ENCODE measurements at regions of chr3 and their contacts with region 1.

Region 1: DNA sequence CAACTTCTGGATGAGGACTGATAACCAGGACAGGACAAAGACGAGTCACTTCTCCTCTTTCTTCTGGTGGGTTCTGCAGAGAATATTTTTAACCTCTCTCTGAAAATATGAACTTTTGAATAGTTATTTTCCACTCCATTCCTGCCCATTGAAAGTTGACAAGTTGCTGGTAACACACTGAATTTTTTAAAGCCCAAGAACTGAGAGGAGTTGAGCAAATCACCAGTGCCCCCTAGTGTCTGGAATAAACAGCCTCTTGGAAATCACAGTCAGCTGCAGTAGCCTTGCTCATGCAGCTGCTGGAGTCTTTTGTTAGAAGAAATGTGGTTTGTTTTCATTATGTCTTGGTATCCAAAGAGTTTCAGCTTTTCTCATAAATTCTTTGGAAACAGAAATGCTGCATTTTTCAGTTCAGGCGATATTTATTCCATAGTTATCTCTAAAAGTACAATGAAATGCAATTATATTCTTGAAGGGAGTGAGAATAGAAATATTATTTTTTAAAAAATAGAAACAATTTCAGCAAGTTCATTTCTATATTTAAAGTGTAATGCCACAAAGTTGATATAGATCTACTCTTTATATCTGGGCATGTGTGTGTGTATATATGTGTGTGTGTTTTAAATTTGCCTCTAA is 741.0 kb upstream of the CBLB start:
- DNase-seq: peak; percentile 88

Region 2: GRCh38 chr3:105686278-105686897 is 923.4 kb before region 1 on chr3:
- in situ Hi-C with region 1: loop called (anchors 25 kb)
- DNase-seq: peak; percentile 25

Region 3: GRCh38 chr3:106206146-106206545 is 403.6 kb before region 1 on chr3:
- in situ Hi-C with region 1: no loop called
- DNase-seq: peak; percentile 94